ENCODE measurements at regions of chr3 and their contacts with region 1.

Region 1: DNA sequence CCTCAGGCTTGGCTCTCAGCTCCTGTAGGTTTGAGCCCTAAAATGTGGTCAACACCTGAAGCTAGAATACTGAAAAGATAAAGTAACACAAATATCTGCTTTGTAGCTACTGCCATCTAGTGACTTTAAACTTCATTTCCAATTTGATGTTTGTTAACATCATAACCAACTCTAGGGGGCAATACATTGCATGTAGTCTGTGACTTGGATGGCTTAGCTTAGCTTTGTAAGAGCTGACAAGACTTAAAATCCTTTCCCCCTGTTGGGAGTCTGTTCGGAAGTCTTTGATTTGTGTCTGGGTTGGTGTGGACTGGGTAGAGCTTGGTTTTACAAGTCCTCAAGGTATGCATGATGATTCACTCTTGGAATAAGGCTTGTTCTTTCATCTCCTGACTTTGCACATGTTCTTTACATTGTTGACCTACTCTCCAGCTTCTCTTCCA is 51.7 kb downstream of the SCN11A start:
- DNase-seq: peak in 4 of 5 donors; percentile 26 to 34 (median 28)
- H3K4me3 ChIP-seq: no peak overlapping the region
- H3K4me3 Mint-ChIP-seq: no peak overlapping the region
- H3K27ac ChIP-seq: no peak overlapping the region
- H3K27ac Mint-ChIP-seq: no peak overlapping the region
- H3K4me1 ChIP-seq: no peaks in the 10 kb centered on the region
- H3K4me1 Mint-ChIP-seq: no peaks in the 10 kb centered on the region
- H3K27me3 ChIP-seq: no peaks in the 10 kb centered on the region
- H3K27me3 Mint-ChIP-seq: peaks cover 5 to 10% of the 10 kb centered on the region in 2 donors

Region 2: GRCh38 chr3:38960953-38961622 is 38.9 kb before region 1 on chr3:
- CTCF ChIA-PET with region 1: interaction called, 10 read pairs
- POLR2A ChIA-PET with region 1: no interaction called
- intact Hi-C with region 1: no loop called
- DNase-seq: peak in 3 of 5 donors; percentile 2 to 8 (median 3)
- H3K4me3 ChIP-seq: no peak overlapping the region
- H3K4me3 Mint-ChIP-seq: no peak overlapping the region
- H3K27ac ChIP-seq: no peak overlapping the region
- H3K27ac Mint-ChIP-seq: peak overlapping the region in 2 of 7 donors; percentile 57 to 60
- H3K4me1 ChIP-seq: no peaks in the 10 kb centered on the region
- H3K4me1 Mint-ChIP-seq: peaks cover 2 to 5% (median 5%) of the 10 kb centered on the region in 4 donors
- H3K27me3 ChIP-seq: no peaks in the 10 kb centered on the region
- H3K27me3 Mint-ChIP-seq: peaks cover 2% of the 10 kb centered on the region in 2 donors

Region 3: DNA sequence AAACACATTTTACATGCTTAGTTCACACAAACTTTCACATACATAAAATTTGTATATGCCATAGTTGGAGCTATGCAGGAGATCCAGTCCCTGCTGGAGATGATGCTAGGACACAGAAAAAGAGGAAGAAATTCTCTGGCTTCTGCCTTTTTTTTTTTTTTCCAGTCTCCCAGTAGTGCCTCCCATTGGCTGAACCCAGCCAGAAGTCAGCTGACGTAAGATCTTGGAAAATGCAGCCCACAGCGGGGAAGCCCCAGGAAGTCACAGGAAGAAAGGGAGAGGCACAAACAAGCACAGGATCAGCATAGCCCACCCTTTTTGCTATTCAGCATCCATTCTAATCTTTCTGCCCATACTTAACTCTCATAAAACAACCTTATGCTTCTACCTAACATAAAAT is 13.3 kb after region 1 on chr3:
- CTCF ChIA-PET with region 1: interaction called, 22 read pairs
- POLR2A ChIA-PET with region 1: no interaction called
- intact Hi-C with region 1: no loop called
- DNase-seq: no peak
- H3K4me3 ChIP-seq: no peak overlapping the region
- H3K4me3 Mint-ChIP-seq: no peak overlapping the region
- H3K27ac ChIP-seq: no peak overlapping the region
- H3K27ac Mint-ChIP-seq: no peak overlapping the region
- H3K4me1 ChIP-seq: no peaks in the 10 kb centered on the region
- H3K4me1 Mint-ChIP-seq: no peaks in the 10 kb centered on the region
- H3K27me3 ChIP-seq: no peaks in the 10 kb centered on the region
- H3K27me3 Mint-ChIP-seq: peaks cover 13 to 24% of the 10 kb centered on the region in 2 donors

Region 4: DNA sequence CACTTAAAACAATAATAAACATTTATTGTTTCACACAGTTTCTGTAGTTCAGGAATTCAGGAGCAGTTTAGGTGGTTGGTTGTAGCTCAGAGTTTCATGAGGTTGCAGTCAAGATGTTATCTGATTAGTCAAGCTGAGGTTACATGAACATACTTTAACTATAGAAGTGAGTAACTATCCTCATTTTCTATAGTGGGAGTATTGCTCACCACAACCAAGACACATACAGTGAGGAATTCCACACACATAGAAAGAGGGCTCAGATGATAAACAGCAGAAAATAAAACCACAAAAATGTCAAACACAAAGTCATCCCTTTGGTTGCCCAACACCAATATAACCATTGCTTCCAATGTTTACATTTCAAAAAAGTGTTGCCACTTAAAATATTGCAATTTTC is 38.1 kb after region 1 on chr3:
- CTCF ChIA-PET with region 1: no interaction called
- POLR2A ChIA-PET with region 1: no interaction called
- intact Hi-C with region 1: no loop called
- DNase-seq: no peak
- H3K4me3 ChIP-seq: no peak overlapping the region
- H3K4me3 Mint-ChIP-seq: no peak overlapping the region
- H3K27ac ChIP-seq: no peak overlapping the region
- H3K27ac Mint-ChIP-seq: no peak overlapping the region
- H3K4me1 ChIP-seq: no peaks in the 10 kb centered on the region
- H3K4me1 Mint-ChIP-seq: no peaks in the 10 kb centered on the region
- H3K27me3 ChIP-seq: no peaks in the 10 kb centered on the region
- H3K27me3 Mint-ChIP-seq: peaks cover 5 to 20% of the 10 kb centered on the region in 2 donors

Region 5: GRCh38 chr3:39056151-39056550 is 56.1 kb after region 1 on chr3:
- CTCF ChIA-PET with region 1: no interaction called
- POLR2A ChIA-PET with region 1: no interaction called
- intact Hi-C with region 1: no loop called
- DNase-seq: no peak
- H3K4me3 ChIP-seq: no peak overlapping the region
- H3K4me3 Mint-ChIP-seq: peak overlapping the region in 3 of 8 donors; percentile 1 to 61 (median 7)
- H3K27ac ChIP-seq: no peak overlapping the region
- H3K27ac Mint-ChIP-seq: peak overlapping the region in 5 of 7 donors; percentile 2 to 67 (median 36)
- H3K4me1 ChIP-seq: peaks cover 31% of the 10 kb centered on the region
- H3K4me1 Mint-ChIP-seq: peaks cover 54 to 77% (median 65%) of the 10 kb centered on the region in 4 donors
- H3K27me3 ChIP-seq: no peaks in the 10 kb centered on the region
- H3K27me3 Mint-ChIP-seq: peaks cover 0 to 1% of the 10 kb centered on the region in 2 donors

Region 6: GRCh38 chr3:39177708-39178332 is 177.8 kb after region 1 on chr3:
- CTCF ChIA-PET with region 1: no interaction called
- POLR2A ChIA-PET with region 1: no interaction called
- intact Hi-C with region 1: no loop called
- DNase-seq: peak; percentile 49 to 71 (median 57)
- H3K4me3 ChIP-seq: peak overlapping the region; percentile 50 to 71
- H3K4me3 Mint-ChIP-seq: peak overlapping the region; percentile 78 to 91 (median 82)
- H3K27ac ChIP-seq: peak overlapping the region; percentile 63
- H3K27ac Mint-ChIP-seq: peak overlapping the region; percentile 68 to 97 (median 95)
- H3K4me1 ChIP-seq: peaks cover 38% of the 10 kb centered on the region
- H3K4me1 Mint-ChIP-seq: peaks cover 32 to 52% (median 39%) of the 10 kb centered on the region in 4 donors
- H3K27me3 ChIP-seq: no peaks in the 10 kb centered on the region
- H3K27me3 Mint-ChIP-seq: no peaks in the 10 kb centered on the region

Measured in CD4-positive, alpha-beta memory T cell (primary cell).